K562 (cell line): ENCODE measurements at regions of chr16 and their contacts with region 1.

Region 1: DNA sequence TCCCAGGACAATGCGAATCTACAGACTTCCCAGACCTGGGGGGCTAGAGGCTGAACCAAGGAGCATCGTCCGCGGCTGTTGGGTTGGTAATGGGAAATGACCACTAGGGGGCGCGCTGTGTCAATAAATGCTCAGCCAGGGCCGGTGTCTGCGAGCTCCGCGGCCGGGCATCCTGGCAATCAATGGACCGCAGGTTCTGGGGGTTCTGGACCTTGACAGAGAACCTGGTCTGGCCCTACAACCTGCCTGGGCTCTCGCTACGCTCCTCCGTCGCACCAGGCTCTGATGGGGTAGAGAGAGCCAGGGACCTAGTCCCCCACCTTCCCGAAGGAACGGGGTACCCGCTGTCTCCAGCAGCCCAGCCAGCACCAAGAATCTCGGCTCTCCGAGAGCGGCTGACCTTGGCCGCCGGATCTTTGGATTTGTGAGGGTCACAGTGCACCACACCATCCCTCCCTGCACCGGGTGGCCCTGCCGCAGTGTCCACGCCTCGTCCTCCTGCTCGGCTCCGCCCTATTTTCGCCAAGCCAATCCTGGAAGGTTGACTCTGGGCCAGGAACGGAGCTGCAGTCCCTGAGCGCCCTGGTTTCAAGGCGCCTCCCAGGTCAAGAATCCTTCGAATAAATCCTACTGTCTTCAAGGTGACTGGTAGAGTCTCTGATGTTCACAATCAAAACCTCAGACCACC is 20.4 kb upstream of the BEAN1 start:
- DNase-seq: peak; percentile 81 to 86 (median 84)
- ATAC-seq: peak; percentile 97
- H3K4me3 ChIP-seq: peak overlapping the region; percentile 33
- H3K27ac ChIP-seq: no peak overlapping the region
- H3K4me1 ChIP-seq: peaks cover 0 to 14% of the 10 kb centered on the region in 2 experiments; a peak in 3 of 5 replicates
- H3K27me3 ChIP-seq: peaks cover 10 to 23% of the 10 kb centered on the region in 2 experiments; a peak in 4 of 5 replicates
- CTCF ChIP-seq: peak; percentile 88 to 93 (median 89)
- EP300 ChIP-seq: no peak
- POLR2A ChIP-seq: no peak
- RAD21 ChIP-seq: peak; percentile 89 to 94

Region 2: DNA sequence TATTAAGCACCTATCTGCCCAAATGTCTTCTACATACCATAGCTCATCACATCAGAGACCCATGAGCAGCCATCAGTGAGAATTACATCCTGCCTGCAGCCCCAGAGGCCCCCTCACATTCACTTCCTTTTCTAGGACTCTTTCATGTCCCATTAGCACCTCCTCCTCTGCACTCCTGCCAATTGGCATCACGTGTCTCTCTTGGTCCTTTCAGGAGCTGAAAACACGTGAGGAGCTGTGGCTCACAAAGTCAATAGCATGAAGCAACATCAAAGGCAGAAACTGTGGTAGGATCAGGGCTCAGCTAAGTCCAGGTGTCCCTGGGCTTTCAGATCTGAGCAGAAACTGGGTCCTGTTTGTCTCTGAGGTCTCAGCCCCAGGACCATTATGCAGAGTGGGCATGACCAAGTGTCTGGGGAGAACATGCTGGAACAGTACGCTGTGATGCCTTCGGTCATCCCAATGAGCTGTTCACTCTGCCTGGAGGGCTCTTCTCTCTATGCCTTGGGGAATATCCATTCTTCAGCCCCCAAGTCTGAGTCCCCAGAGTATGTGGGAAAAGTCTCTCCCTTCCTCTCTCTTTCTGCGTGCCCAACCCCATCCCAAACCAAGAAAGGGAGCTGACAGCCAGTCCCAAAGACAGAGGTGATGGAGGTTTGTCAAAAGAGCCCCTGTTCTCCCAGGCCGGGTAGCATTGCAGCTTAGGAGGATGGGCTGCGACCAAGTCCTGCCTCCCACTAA is 497.2 kb before region 1 on chr16:
- CTCF ChIA-PET with region 1: no interaction called
- POLR2A ChIA-PET with region 1: no interaction called
- in situ Hi-C with region 1: no loop called
- intact Hi-C with region 1: no loop called
- DNase-seq: no peak
- ATAC-seq: no peak
- H3K4me3 ChIP-seq: no peak overlapping the region
- H3K27ac ChIP-seq: no peak overlapping the region
- H3K4me1 ChIP-seq: no peaks in the 10 kb centered on the region
- H3K27me3 ChIP-seq: no peaks in the 10 kb centered on the region; a peak in 1 of 5 replicates
- CTCF ChIP-seq: no peak
- EP300 ChIP-seq: no peak
- POLR2A ChIP-seq: no peak
- RAD21 ChIP-seq: no peak

Region 3: DNA sequence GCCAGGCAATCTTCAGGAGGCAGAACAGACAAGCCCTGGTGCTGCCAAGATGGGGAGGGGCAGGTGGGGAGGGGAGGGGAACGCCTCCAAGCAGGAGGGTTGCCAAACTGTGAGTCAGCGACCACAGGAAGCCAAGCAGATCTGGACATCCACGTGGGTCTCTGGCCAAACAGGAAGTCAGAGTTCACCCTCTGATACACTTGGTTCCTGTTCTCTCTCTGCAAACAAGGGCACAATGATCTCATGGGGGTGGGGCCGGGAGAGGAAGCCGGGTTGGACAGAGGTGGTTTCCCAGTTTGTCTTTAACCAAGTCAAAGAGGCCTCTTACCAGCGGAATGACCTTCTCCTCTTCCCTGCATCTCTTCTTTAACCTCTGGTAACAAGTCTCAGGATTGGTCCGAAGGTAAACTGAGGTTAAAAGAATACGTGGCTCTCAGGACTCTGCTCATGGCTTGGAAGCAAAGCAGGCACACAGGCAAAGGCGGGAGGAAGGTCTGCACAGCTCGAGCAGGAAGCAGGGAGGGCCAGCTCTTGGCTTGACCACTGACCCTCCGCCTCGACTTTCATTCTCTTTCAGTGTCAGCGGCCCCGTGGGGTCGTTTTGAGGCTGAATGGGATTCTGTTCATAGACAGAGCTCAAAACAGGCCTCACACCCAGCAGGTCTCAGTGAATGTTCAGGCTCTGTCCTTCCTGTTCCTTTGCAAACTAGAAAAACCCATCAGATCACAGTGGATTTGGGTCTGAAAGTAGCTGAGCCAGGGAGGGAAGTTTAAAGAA is 110.3 kb after region 1 on chr16:
- CTCF ChIA-PET with region 1: no interaction called
- POLR2A ChIA-PET with region 1: no interaction called
- in situ Hi-C with region 1: no loop called
- intact Hi-C with region 1: loop called (anchors 1 kb)
- DNase-seq: peak; percentile 95 to 98 (median 96)
- ATAC-seq: peak; percentile 97
- H3K4me3 ChIP-seq: peak overlapping the region; percentile 30
- H3K27ac ChIP-seq: peak overlapping the region; percentile 94
- H3K4me1 ChIP-seq: peaks cover 29 to 35% of the 10 kb centered on the region in 2 experiments
- H3K27me3 ChIP-seq: no peaks in the 10 kb centered on the region
- CTCF ChIP-seq: 0 out of 6 replicates have a peak, but pooled peaks of 1 of the 3 experiments have one; percentile 15
- EP300 ChIP-seq: peak; percentile 71
- POLR2A ChIP-seq: peak; percentile 86
- RAD21 ChIP-seq: no peak

Region 4: DNA sequence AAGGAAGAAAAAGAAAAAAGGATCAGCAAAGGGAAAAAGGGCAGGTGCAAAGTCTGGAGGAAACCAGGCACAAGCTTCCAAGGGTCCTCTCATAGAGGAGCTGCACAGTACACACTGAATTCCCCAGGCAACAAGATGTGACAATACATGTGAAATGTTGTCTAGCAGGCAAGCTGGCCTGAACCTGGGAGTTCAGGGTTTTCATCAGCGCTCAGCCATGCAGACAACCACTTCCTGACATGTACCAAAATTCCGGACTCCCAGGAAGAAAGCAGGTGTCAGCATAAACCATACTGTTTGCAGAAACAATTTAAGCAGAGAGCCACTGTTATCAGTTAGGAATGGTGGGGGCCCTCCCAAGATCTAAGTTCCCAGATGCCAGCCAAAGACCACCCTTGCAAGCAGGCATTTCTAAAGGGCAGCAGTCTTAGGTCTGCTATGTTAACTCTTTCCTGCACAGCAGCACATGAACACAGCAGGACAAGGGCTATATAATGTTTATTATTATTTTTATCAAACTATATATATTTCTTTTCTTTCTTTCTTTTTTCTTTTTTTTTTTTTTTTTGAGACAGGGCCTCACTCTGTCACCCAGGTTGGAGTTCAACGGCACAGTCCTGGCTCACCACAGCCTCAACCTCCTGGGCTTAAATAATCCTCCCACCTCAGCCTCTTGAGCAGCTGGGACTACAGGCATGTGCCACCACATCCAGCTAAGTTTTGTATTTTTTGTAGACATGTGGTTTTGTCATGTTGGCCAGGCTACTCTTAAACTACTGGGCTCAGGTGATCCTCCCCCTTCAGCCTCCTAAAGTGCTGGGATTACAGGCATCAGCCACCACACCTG is 133.2 kb after region 1 on chr16:
- CTCF ChIA-PET with region 1: no interaction called
- POLR2A ChIA-PET with region 1: no interaction called
- in situ Hi-C with region 1: no loop called
- intact Hi-C with region 1: no loop called
- DNase-seq: no peak
- ATAC-seq: no peak
- H3K4me3 ChIP-seq: no peak overlapping the region
- H3K27ac ChIP-seq: no peak overlapping the region
- H3K4me1 ChIP-seq: 0 out of 5 replicates have a peak, but pooled peaks cover 0 to 1% of the 10 kb centered on the region in 2 experiments
- H3K27me3 ChIP-seq: no peaks in the 10 kb centered on the region
- CTCF ChIP-seq: no peak
- EP300 ChIP-seq: no peak
- POLR2A ChIP-seq: no peak
- RAD21 ChIP-seq: no peak

Region 5: DNA sequence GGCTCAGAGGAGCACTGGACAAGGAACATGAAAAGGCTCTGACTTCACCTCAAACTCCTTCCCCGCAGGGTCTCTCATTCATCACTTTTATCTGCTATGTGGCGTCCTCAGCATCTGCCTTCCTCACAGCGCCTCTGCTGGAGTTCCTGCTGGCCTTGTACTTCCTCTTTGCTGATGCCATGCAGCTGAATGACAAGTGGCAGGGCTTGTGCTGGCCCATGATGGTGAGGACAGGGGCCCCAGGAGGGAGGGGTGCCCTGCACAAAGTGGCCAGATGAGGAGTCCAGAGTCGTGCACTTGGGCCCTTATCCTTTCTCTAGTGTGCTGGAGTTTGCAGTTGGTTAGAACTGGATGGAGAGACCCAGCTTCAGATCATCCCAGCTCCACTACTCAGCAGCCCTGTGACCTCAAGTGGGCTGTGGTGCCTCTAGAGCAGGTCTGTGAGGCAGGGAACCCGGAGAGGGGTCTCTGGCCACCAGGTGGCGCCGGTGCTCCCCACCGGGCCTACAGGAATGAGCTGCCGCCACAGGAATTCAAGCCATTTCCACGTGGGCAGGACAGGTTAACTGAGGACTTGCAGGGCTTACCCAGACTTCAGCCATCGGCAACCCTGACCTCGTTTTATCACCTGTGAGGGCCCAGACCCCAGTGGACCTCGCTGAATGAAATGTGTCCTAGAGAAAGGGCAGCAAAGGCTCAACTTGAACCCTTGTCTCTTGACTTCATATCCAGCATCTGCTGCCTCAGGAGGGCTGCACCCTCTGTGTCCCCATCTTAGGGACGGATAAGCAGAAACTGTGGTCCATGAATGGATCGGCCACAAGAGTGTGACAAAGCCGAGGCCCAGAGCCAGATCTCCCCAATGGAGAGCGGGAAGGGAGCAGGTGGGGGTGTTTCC is 201.8 kb after region 1 on chr16:
- CTCF ChIA-PET with region 1: interaction called, 3 read pairs
- POLR2A ChIA-PET with region 1: no interaction called
- in situ Hi-C with region 1: no loop called
- intact Hi-C with region 1: loop called (anchors 5 kb)
- DNase-seq: peak; percentile 83 to 91 (median 87)
- ATAC-seq: peak; percentile 74
- H3K4me3 ChIP-seq: no peak overlapping the region
- H3K27ac ChIP-seq: peak overlapping the region; percentile 33
- H3K4me1 ChIP-seq: peaks cover 24 to 51% of the 10 kb centered on the region in 2 experiments
- H3K27me3 ChIP-seq: no peaks in the 10 kb centered on the region
- CTCF ChIP-seq: peak; percentile 93 to 96 (median 96)
- EP300 ChIP-seq: no peak
- POLR2A ChIP-seq: no peak
- RAD21 ChIP-seq: peak; percentile 77 to 90

Region 6: GRCh38 chr16:66859397-66860068 is 452.9 kb after region 1 on chr16:
- CTCF ChIA-PET with region 1: no interaction called
- POLR2A ChIA-PET with region 1: interaction called, 3 read pairs
- in situ Hi-C with region 1: loop called (anchors 10 kb)
- intact Hi-C with region 1: no loop called
- DNase-seq: peak in 1 of 4 experiments; percentile 3
- ATAC-seq: no peak
- H3K4me3 ChIP-seq: no peak overlapping the region
- H3K27ac ChIP-seq: no peak overlapping the region
- H3K4me1 ChIP-seq: peaks cover 0 to 3% of the 10 kb centered on the region in 2 experiments; a peak in 1 of 5 replicates
- H3K27me3 ChIP-seq: no peaks in the 10 kb centered on the region; a peak in 1 of 5 replicates
- CTCF ChIP-seq: no peak
- EP300 ChIP-seq: no peak
- POLR2A ChIP-seq: no peak
- RAD21 ChIP-seq: no peak

Region 7: DNA sequence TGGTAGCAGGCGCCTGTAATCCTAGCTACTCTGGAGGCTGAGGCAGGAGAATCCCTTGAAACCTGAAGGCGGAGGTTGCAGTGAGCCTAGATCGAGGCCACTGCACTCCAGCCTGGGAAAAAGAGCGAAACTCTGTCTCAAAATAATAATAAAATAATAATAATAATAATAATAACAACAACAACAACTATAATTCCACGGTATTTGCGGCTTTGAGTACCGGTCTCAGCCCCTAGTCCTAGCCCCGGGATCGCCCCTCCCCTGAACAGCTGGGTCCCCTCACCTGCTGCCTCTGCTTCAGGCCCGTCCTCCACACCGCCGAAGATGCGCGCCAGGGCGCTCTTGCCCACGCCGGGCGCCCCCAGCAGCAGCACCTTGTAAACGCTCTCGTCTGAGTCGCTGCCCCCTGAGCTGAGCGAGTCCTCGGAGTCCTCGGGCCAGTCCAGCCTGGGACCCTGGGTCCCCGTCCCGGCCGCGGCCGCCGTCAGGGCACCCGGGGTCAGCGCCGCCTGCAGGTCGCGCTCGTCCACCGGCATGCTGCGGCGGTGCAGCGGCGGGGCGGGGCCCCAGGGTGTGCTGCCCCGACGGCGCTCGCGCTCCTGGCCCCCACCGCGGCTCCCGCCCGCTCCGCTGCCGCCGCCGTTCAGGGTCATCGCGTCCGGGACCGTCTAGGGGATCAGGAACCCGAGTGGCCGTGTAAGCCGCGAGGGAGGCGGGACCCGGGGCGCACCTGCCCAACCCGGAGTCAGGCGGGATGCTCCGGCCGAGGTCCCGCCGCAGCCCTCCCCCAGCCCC is 518.0 kb after region 1 on chr16:
- CTCF ChIA-PET with region 1: no interaction called
- POLR2A ChIA-PET with region 1: no interaction called
- in situ Hi-C with region 1: no loop called
- intact Hi-C with region 1: loop called (anchors 5 kb)
- DNase-seq: peak; percentile 62 to 92 (median 88)
- ATAC-seq: peak; percentile 93
- H3K4me3 ChIP-seq: peak overlapping the region; percentile 32
- H3K27ac ChIP-seq: no peak overlapping the region
- H3K4me1 ChIP-seq: peaks cover 0 to 31% of the 10 kb centered on the region in 2 experiments; a peak in 3 of 5 replicates
- H3K27me3 ChIP-seq: peaks cover 4 to 45% of the 10 kb centered on the region in 2 experiments; a peak in 2 of 5 replicates
- CTCF ChIP-seq: peak; percentile 52 to 77 (median 66)
- EP300 ChIP-seq: no peak
- POLR2A ChIP-seq: no peak
- RAD21 ChIP-seq: peak in 1 of 2 experiments; percentile 66; a peak in 3 of 4 replicates